ENCODE measurements at regions of chr18 and their contacts with region 1.

Region 1: GRCh38 chr18:46917108-46917802 is at the starts of genes KATNAL2 and PIAS2:
- DNase-seq: peak; percentile 68
- H3K4me3 Mint-ChIP-seq: peak within 1 kb of the TSS; percentile 94
- H3K27ac Mint-ChIP-seq: peak within 1 kb of the TSS; percentile 90
- H3K4me1 Mint-ChIP-seq: peaks cover 49% of the 10 kb centered on the region
- H3K27me3 Mint-ChIP-seq: peaks cover 5% of the 10 kb centered on the region
- total RNA-seq, gene KATNAL2: 0.26 and 0.27 TPM in 2 replicates
- total RNA-seq, gene PIAS2: 28.5 and 28.7 TPM in 2 replicates

Region 2: DNA sequence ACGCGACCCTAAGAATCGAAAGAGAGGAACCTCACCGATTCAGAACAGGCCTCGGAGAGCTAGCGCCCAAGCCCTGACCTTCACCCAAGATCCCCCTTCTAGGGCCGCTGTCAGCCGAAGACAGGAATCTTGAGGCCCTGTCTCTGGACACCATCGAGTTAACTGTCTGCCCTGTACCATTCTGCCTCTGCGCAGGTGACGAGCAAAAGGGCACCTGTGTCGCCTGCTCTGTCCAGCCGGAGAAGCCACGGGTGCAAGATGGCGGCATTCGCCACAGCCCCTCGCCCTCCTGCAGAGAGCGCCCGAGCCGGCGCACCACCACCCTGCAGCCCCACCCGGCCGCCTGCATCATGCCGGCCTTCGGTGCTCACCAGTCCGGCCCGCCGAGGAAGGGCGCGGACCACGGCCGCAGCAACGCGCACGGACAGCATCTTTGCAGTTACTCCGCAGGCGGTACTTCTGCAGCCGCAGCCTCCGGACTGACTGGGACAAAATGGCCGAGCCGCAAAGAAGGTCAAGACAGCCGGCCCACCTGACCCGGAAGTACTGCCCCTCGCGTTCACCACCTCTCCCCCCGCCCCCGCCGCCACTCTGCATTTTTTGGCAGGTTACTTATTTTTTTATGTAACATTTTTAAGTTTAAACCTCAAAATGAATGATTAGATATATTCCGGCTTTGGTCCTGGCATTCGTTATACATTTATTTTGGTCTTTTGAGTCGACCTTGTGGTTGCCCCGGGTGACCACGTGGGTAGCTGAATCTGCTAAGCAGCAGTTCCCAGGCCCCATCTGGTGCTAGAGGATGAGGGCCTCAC is 819.2 kb before region 1 on chr18 and contains the start of gene ATP5F1A:
- intact Hi-C with region 1: loop called (anchors 10 kb)
- DNase-seq: peak; percentile 76
- H3K4me3 Mint-ChIP-seq: peak within 1 kb of the TSS; percentile 99
- H3K27ac Mint-ChIP-seq: peak within 1 kb of the TSS; percentile 99
- H3K4me1 Mint-ChIP-seq: peaks cover 23% of the 10 kb centered on the region
- H3K27me3 Mint-ChIP-seq: peaks cover 3% of the 10 kb centered on the region
- total RNA-seq, gene ATP5F1A: 412 and 420 TPM in 2 replicates

Region 3: DNA sequence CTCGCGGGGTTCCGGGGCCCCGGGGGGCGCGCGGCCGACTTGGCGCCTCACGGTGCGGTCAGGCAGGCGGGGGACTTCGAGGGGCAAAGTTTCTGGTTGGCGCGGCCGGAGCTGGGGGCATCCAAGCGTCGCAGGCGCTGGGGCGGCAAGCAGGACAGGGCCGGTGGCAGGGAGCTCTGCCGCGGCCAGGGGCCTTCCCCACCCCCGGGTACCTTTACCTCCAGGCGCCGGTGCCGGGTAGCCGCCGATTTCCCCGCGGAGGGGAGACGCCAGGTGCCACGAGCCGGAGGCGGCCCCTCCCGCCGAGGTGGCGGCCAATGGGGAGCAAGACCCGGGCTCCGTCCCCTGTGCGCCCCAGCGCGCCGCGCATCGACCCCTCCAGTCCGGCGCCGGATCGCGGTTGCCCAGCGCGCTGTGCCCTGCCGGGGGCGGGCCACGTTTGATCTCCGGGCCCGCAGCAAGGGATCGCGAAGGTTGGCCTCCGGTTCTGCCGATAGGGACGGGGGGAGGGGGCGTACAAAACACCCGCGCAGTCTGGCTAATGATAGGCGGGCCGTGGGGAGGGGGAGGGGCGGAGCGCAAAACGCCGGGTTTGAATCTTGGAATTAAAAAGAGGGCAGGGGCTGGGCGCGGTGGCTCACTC is 160.6 kb before region 1 on chr18 and contains the start of gene ST8SIA5:
- intact Hi-C with region 1: loop called (anchors 2 kb)
- DNase-seq: no peak
- H3K4me3 Mint-ChIP-seq: peak within 1 kb of the TSS; percentile 68
- H3K27ac Mint-ChIP-seq: no peak within 1 kb of the TSS
- H3K4me1 Mint-ChIP-seq: peaks cover 24% of the 10 kb centered on the region
- H3K27me3 Mint-ChIP-seq: peaks cover 49% of the 10 kb centered on the region
- total RNA-seq, gene ST8SIA5: not detected in 2 replicates

Region 4: GRCh38 chr18:46849007-46849406 is 68.2 kb before region 1 on chr18:
- intact Hi-C with region 1: no loop called
- DNase-seq: no peak
- H3K4me3 Mint-ChIP-seq: no peak overlapping the region
- H3K27ac Mint-ChIP-seq: no peak overlapping the region
- H3K4me1 Mint-ChIP-seq: no peaks in the 10 kb centered on the region
- H3K27me3 Mint-ChIP-seq: no peaks in the 10 kb centered on the region

Region 5: DNA sequence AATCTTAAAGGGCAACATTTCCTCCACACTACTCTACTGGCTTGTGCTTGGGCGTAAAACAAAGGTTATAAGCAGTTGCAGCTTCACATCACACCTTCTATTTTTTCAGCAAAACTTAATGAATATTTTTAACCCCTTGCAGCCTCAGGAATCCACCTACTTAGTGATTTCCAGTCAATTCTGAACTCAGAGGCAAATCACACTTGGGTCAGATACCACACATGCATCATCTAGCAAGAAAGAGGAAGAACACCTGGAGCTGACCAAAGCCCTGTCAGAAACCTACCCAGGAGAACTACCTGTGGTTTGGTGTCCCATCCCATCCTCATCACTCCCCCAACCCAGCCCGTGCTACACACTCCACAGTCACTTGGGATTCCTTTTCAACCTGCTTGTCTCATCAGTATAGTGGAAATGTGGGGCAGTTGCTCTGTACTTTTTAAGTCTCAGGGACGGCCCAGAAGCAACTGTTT is 25.5 kb before region 1 on chr18:
- intact Hi-C with region 1: loop called (anchors 1 kb)
- DNase-seq: no peak
- H3K4me3 Mint-ChIP-seq: no peak overlapping the region
- H3K27ac Mint-ChIP-seq: peak overlapping the region; percentile 21
- H3K4me1 Mint-ChIP-seq: peaks cover 35% of the 10 kb centered on the region
- H3K27me3 Mint-ChIP-seq: no peaks in the 10 kb centered on the region

Region 6: GRCh38 chr18:46946656-46947282 is 29.5 kb after region 1 on chr18:
- intact Hi-C with region 1: loop called (anchors 1 kb)
- DNase-seq: peak; percentile 55
- H3K4me3 Mint-ChIP-seq: no peak overlapping the region
- H3K27ac Mint-ChIP-seq: no peak overlapping the region
- H3K4me1 Mint-ChIP-seq: no peaks in the 10 kb centered on the region
- H3K27me3 Mint-ChIP-seq: peaks cover 8% of the 10 kb centered on the region

Region 7: GRCh38 chr18:47120428-47120827 is 203.2 kb after region 1 on chr18:
- intact Hi-C with region 1: no loop called
- DNase-seq: no peak
- H3K4me3 Mint-ChIP-seq: no peak overlapping the region
- H3K27ac Mint-ChIP-seq: peak overlapping the region; percentile 26
- H3K4me1 Mint-ChIP-seq: peaks cover 21% of the 10 kb centered on the region
- H3K27me3 Mint-ChIP-seq: no peaks in the 10 kb centered on the region